Activated T-helper 2 cell treated with anti-CD3 and anti-CD28 coated beads, Interferon-gamma antibody, Interleukin-2, Interleukin-4, amounts not matched to agents 10 μg/mL and 5 μg/mL and 100 μg/mL, durations not matched to agents 14 hours and 24 hours and 36 hours (primary cell): ENCODE measurements at regions of chr3 and their contacts with region 1.

Region 1: DNA sequence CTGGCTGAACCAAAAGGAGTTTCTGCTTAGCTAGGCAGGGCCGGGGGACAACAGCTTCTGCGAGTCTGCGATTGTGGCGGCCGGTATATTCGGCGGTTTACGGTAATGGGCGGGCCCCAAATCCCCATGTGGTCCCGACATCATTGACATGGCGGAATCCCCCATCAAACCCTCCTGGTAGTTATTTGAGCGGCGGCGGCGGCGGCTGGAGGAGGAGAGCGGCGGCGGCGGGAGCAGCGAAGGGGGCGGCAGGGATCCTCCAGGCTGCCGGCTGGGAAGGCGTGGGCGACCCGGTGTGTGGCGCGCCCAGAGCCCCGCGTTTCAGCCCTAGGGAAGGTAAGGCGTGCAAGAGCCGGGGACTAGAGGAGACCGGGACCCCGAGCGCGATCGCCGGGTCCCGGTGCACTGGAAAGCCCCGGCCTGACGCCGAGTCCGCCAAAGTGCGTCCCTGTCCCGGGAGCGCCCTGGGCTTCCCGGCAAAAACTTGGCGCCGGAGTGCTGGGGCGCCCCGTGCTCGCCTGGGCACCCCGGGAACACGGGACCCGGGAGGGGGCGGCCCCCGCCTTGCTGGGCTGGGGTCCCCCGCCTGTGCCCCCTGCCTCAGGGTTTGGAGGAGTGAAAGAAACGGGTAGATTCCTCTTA is at the start of gene FNDC3B:
- DNase-seq: peak; percentile 89
- H3K4me3 Mint-ChIP-seq: peak within 1 kb of the TSS; percentile 98
- H3K27ac Mint-ChIP-seq: peak within 1 kb of the TSS; percentile 98
- H3K4me1 Mint-ChIP-seq: peaks cover 25% of the 10 kb centered on the region
- H3K27me3 Mint-ChIP-seq: peaks cover 10% of the 10 kb centered on the region
- total RNA-seq, gene FNDC3B: 24.7 and 26.9 TPM in 2 replicates

Region 2: DNA sequence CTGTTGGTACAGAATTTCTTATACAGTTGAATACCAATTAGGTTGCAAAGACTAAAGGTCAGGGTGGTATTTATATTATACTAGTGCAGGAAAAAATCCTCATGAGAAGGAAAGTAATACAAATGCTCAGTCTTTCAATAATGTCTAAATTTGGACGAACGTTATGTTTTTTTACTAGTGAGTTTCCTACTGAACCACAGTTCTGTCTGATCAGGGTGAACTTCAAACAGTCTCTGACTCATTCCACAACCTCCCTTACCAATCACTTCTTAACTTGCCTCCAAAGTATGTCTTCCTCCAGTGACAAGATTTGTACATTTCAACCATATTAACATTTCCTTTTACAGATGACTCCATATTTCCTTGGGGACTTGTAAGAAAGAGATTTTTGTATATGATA is 193.0 kb before region 1 on chr3:
- intact Hi-C with region 1: loop called (anchors 10 kb)
- DNase-seq: no peak
- H3K4me3 Mint-ChIP-seq: peak overlapping the region; percentile 47
- H3K27ac Mint-ChIP-seq: peak overlapping the region; percentile 84
- H3K4me1 Mint-ChIP-seq: peaks cover 24% of the 10 kb centered on the region
- H3K27me3 Mint-ChIP-seq: peaks cover 12% of the 10 kb centered on the region

Region 3: DNA sequence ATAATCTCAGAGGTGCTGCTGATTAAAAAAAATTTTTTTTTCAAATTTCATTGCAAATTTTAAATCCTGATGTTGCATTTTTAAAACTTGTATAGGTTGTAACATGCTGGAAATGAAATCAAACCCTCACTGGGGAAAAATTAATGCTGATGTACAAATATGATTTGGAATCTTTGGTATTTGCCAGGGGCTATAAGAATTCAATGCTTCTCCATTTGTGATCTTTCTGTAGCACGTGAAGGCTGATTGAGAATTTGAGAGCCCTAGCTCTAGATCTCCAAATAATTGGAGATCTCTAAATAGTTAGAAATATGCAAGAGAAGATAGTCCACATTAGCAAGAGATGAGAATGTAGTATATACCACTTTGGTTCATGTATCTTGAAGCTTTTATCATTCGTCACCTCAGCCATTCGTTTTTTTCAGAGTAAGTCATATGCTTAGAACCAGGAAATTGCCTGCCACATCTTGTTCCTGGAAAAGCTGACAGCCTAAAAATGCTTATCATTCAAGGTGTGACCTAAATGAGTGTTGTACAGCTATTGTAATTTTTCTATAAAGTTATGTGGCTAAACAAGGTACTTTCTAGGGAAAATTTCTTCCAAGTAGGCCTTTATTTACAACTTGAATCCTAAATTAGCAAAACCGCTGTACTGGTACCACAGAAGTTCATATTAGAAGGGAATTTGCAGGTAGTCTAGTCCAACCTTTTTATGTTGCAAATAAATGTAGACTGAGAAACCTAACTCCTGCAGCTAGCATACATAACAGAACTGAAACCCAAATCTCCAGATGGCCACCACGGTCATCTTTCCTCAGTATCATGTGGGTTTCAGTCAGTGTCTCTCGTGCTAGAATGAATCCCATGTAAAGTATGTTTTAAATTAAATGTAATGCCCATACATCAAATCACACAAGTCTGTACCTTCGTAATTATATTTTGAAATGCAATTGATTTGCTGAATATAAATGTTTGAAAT is 48.3 kb after region 1 on chr3:
- intact Hi-C with region 1: loop called (anchors 2 kb)
- DNase-seq: no peak
- H3K4me3 Mint-ChIP-seq: no peak overlapping the region
- H3K27ac Mint-ChIP-seq: peak overlapping the region; percentile 62
- H3K4me1 Mint-ChIP-seq: peaks cover 55% of the 10 kb centered on the region
- H3K27me3 Mint-ChIP-seq: no peaks in the 10 kb centered on the region

Region 4: GRCh38 chr3:172209333-172210321 is 170.1 kb after region 1 on chr3:
- intact Hi-C with region 1: loop called (anchors 5 kb)
- DNase-seq: no peak
- H3K4me3 Mint-ChIP-seq: no peak overlapping the region
- H3K27ac Mint-ChIP-seq: no peak overlapping the region
- H3K4me1 Mint-ChIP-seq: peaks cover 27% of the 10 kb centered on the region
- H3K27me3 Mint-ChIP-seq: no peaks in the 10 kb centered on the region

Region 5: GRCh38 chr3:172244011-172244410 is 204.5 kb after region 1 on chr3:
- intact Hi-C with region 1: no loop called
- DNase-seq: no peak
- H3K4me3 Mint-ChIP-seq: no peak overlapping the region
- H3K27ac Mint-ChIP-seq: no peak overlapping the region
- H3K4me1 Mint-ChIP-seq: peaks cover 11% of the 10 kb centered on the region
- H3K27me3 Mint-ChIP-seq: no peaks in the 10 kb centered on the region